ENCODE measurements at regions of chr19 and their contacts with region 1.

Region 1: GRCh38 chr19:7340959-7341837 is 7.5 kb upstream of the ARHGEF18 start:
- DNase-seq: peak; percentile 92
- H3K4me3 Mint-ChIP-seq: peak overlapping the region; percentile 39
- H3K27ac Mint-ChIP-seq: no peak overlapping the region
- H3K4me1 Mint-ChIP-seq: peaks cover 42% of the 10 kb centered on the region
- H3K27me3 Mint-ChIP-seq: no peaks in the 10 kb centered on the region

Region 2: GRCh38 chr19:6947745-6948144 is 393.5 kb before region 1 on chr19:
- CTCF ChIA-PET with region 1: no interaction called
- intact Hi-C with region 1: loop called (anchors 10 kb)
- DNase-seq: peak; percentile 82
- H3K4me3 Mint-ChIP-seq: peak overlapping the region; percentile 23
- H3K27ac Mint-ChIP-seq: peak overlapping the region; percentile 63
- H3K4me1 Mint-ChIP-seq: peaks cover 17% of the 10 kb centered on the region
- H3K27me3 Mint-ChIP-seq: no peaks in the 10 kb centered on the region

Region 3: GRCh38 chr19:7098701-7099596 is 242.2 kb before region 1 on chr19:
- CTCF ChIA-PET with region 1: interaction called, 11 read pairs
- intact Hi-C with region 1: loop called (anchors 1 kb)
- DNase-seq: peak; percentile 88
- H3K4me3 Mint-ChIP-seq: peak overlapping the region; percentile 94
- H3K27ac Mint-ChIP-seq: peak overlapping the region; percentile 90
- H3K4me1 Mint-ChIP-seq: peaks cover 16% of the 10 kb centered on the region
- H3K27me3 Mint-ChIP-seq: no peaks in the 10 kb centered on the region

Region 4: GRCh38 chr19:7145494-7146485 is 195.4 kb before region 1 on chr19:
- CTCF ChIA-PET with region 1: interaction called, 17 read pairs
- intact Hi-C with region 1: loop called (anchors 1 kb)
- DNase-seq: no peak
- H3K4me3 Mint-ChIP-seq: no peak overlapping the region
- H3K27ac Mint-ChIP-seq: no peak overlapping the region
- H3K4me1 Mint-ChIP-seq: no peaks in the 10 kb centered on the region
- H3K27me3 Mint-ChIP-seq: no peaks in the 10 kb centered on the region

Region 5: GRCh38 chr19:7326105-7326877 is 14.9 kb before region 1 on chr19:
- CTCF ChIA-PET with region 1: interaction called, 10 read pairs
- intact Hi-C with region 1: no loop called
- DNase-seq: peak; percentile 77
- H3K4me3 Mint-ChIP-seq: no peak overlapping the region
- H3K27ac Mint-ChIP-seq: no peak overlapping the region
- H3K4me1 Mint-ChIP-seq: no peaks in the 10 kb centered on the region
- H3K27me3 Mint-ChIP-seq: no peaks in the 10 kb centered on the region

Region 6: GRCh38 chr19:7355151-7355820 is 14.1 kb after region 1 on chr19:
- CTCF ChIA-PET with region 1: interaction called, 13 read pairs
- intact Hi-C with region 1: no loop called
- DNase-seq: no peak
- H3K4me3 Mint-ChIP-seq: no peak overlapping the region
- H3K27ac Mint-ChIP-seq: no peak overlapping the region
- H3K4me1 Mint-ChIP-seq: peaks cover 49% of the 10 kb centered on the region
- H3K27me3 Mint-ChIP-seq: no peaks in the 10 kb centered on the region

Region 7: DNA sequence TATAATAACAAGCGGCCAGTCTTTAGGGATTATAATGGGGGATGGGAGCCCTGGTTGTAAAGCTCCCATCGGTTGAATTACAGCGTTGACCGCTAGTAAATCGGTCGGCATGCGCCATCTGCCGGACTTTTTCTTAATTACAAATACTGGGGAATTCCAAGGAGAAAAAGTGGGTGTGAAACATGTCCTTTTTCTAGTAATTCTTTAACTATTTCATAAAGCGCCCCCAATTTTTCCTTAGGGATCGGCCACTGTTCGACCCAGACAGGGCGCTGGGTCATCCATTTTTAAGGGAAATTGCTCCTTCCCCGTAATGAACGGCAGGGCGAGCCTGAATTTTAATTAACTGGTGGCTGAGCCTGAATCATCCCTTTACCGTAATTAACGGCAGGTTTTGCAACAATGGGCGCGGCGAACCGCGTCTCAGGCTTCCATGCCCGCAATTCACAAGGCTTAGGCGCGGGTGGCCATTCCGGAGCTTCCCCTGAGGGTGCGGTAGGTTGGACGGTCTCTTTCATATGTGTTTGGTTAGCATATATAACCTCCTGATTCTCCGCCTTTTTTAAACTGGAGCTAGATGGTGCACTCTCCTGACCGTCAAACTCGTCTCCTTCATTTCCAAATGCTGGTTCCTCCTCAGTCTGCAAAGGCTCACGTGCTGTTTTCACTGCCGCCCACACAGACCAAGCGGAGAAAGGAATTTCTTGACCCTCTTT is 458.6 kb after region 1 on chr19:
- CTCF ChIA-PET with region 1: no interaction called
- intact Hi-C with region 1: loop called (anchors 10 kb)
- DNase-seq: peak; percentile 76
- H3K4me3 Mint-ChIP-seq: peak overlapping the region; percentile 60
- H3K27ac Mint-ChIP-seq: no peak overlapping the region
- H3K4me1 Mint-ChIP-seq: peaks cover 5% of the 10 kb centered on the region
- H3K27me3 Mint-ChIP-seq: peaks cover 14% of the 10 kb centered on the region